Heart left ventricle (tissue), 16 donors: ENCODE measurements at regions of chr7 and their contacts with region 1.

Region 1: GRCh38 chr7:70693686-70694360 is 438.1 kb upstream of the GALNT17 start:
- DNase-seq: peak; percentile 74 to 85 (median 84)
- ATAC-seq: peak; percentile 49 to 92 (median 84)
- H3K4me3 ChIP-seq: peak overlapping the region; percentile 36 to 89 (median 78)
- H3K27ac ChIP-seq: peak overlapping the region; percentile 1 to 82 (median 62)
- H3K4me1 ChIP-seq: peaks cover 0 to 21% (median 8%) of the 10 kb centered on the region in 12 donors
- H3K27me3 ChIP-seq: peaks cover 0 to 22% (median 0%) of the 10 kb centered on the region in 9 donors
- CTCF ChIP-seq: peak in 6 of 12 donors; percentile 13 to 37 (median 24)
- POLR2A ChIP-seq: peak in 1 of 2 donors; percentile 62

Region 2: DNA sequence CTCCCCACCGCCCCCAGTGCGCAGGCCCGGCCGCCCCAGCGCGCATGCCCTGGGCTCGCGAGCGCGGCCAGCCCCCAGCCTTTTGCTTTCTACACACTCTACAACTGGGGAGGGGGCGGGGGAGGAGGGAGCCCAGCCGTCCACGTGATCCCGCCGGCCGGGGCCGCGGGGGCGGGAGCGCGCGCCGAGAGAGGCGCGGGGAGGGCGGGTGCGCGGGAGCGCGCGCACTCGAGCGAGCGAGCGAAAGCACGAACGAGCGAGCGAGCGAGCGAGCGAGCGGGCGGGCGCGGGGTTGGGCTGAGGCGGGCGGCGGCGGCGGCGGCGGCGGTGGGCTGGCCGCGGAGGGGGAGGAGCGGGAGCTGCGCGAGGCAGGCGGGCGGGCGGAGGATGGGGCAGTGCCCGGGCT is 1095.7 kb before region 1 on chr7 and contains the start of gene AUTS2:
- intact Hi-C with region 1: loop called in 1 of 10 experiments (anchors 10 kb)
- DNase-seq: peak; percentile 86 to 91 (median 90)
- ATAC-seq: peak; percentile 85 to 93 (median 90)
- H3K4me3 ChIP-seq: peak within 1 kb of the TSS; percentile 65 to 98 (median 85)
- H3K27ac ChIP-seq: peak within 1 kb of the TSS; percentile 72 to 95 (median 87)
- H3K4me1 ChIP-seq: peaks cover 0 to 34% (median 4%) of the 10 kb centered on the region in 12 donors
- H3K27me3 ChIP-seq: no peaks in the 10 kb centered on the region
- CTCF ChIP-seq: no peak
- POLR2A ChIP-seq: no peak
- total RNA-seq, gene AUTS2: 5.4 to 14.0 (median 8.3) TPM

Region 3: DNA sequence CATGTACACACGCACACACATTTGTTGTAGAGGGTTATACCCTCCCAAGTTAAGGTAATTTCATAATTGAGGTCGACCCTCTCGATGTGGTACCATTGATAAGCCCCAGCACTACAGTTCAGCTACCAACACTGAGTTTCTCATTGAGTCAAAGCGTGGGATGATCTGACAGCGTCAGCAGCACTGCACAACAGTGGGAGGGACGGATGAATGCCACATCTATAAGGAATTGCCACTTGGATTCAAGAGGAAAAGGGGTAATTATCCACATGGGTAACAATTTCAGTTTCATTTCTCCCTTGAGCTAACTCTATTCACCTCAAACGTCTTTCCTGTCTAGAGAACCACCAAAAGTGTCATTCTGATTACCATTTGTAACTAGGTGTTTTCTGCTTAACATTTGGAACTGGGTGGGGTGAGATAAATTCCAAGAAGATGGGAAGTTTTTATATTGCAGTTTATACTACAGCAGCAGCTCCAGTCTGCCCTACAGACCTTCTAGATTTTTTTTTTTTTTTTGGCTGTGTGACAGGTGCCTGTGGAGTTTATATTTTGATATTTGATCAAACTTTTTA is 752.7 kb before region 1 on chr7:
- intact Hi-C with region 1: loop called in 2 of 10 experiments (anchors 10 kb)
- DNase-seq: no peak
- ATAC-seq: no peak
- H3K4me3 ChIP-seq: no peak overlapping the region
- H3K27ac ChIP-seq: no peak overlapping the region
- H3K4me1 ChIP-seq: no peaks in the 10 kb centered on the region
- H3K27me3 ChIP-seq: no peaks in the 10 kb centered on the region
- CTCF ChIP-seq: no peak
- POLR2A ChIP-seq: no peak

Region 4: GRCh38 chr7:70047891-70048448 is 645.9 kb before region 1 on chr7:
- intact Hi-C with region 1: loop called in 9 of 10 experiments (anchors 2 to 10 kb)
- DNase-seq: no peak
- ATAC-seq: peak in 1 of 4 donors; percentile 47
- H3K4me3 ChIP-seq: no peak overlapping the region
- H3K27ac ChIP-seq: no peak overlapping the region
- H3K4me1 ChIP-seq: peaks cover 0 to 9% (median 2%) of the 10 kb centered on the region in 12 donors
- H3K27me3 ChIP-seq: no peaks in the 10 kb centered on the region
- CTCF ChIP-seq: no peak
- POLR2A ChIP-seq: no peak

Region 5: GRCh38 chr7:70183278-70183677 is 510.5 kb before region 1 on chr7:
- intact Hi-C with region 1: loop called in 1 of 10 experiments (anchors 10 kb)
- DNase-seq: no peak
- ATAC-seq: no peak
- H3K4me3 ChIP-seq: no peak overlapping the region
- H3K27ac ChIP-seq: no peak overlapping the region
- H3K4me1 ChIP-seq: no peaks in the 10 kb centered on the region
- H3K27me3 ChIP-seq: no peaks in the 10 kb centered on the region
- CTCF ChIP-seq: no peak
- POLR2A ChIP-seq: no peak

Region 6: DNA sequence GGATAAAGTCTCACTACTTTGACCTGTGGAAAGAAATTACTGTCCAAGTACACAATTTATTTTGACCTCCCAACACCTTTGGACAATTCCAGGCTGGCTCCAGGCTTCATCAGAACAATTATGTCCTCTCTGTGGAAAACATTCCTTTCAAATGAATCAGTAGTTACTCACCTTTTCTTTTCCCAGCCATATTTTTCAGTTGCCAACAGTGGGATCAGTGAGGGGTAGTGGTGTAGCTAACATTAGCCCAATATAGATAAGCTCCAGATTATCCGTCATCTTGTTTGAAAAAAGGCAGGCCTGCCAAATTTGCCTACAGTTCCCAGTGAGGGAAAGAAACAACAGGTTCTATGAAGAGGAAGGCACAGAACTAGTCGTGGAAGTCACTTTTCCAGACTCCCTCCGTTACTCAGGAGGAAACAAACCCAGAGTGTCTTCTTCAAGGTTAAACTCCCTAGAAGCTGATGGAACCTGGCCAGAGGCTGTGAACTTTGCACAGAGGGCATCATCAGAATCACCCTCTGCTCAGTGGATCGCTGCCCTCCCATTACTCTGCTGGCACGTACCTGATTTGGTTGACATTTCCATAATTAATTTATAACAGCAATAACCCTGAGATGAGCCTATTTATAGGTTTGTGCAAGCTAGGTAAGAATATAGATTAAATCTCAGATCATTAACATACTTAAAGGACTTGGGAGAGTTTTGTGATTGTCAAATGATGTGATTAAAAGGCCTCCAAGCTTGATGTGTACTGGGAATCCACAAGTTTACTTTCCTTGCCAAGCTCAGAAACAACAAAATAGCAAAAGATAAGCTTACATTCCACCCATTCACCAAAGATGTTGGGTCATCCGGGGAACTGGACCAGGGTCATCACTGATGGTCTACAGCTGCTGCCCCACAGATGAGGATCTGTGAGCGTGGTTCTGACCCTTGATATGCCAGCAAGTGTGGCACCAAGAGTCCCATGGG is 216.5 kb before region 1 on chr7:
- intact Hi-C with region 1: loop called in 1 of 10 experiments (anchors 10 kb)
- DNase-seq: no peak
- ATAC-seq: peak; percentile 17 to 71 (median 54)
- H3K4me3 ChIP-seq: no peak overlapping the region
- H3K27ac ChIP-seq: no peak overlapping the region
- H3K4me1 ChIP-seq: peaks cover 0 to 35% (median 19%) of the 10 kb centered on the region in 12 donors
- H3K27me3 ChIP-seq: no peaks in the 10 kb centered on the region
- CTCF ChIP-seq: no peak
- POLR2A ChIP-seq: no peak